MCF 10A (cell line): ENCODE measurements at regions of chr3 and their contacts with region 1.

Region 1: GRCh38 chr3:35908366-35909232 is 269.3 kb downstream of the ARPP21 start:
- DNase-seq: peak; percentile 79
- H3K4me3 Mint-ChIP-seq: no peak overlapping the region
- H3K27ac Mint-ChIP-seq: no peak overlapping the region
- H3K4me1 Mint-ChIP-seq: no peaks in the 10 kb centered on the region
- H3K27me3 Mint-ChIP-seq: peaks cover 32% of the 10 kb centered on the region
- CTCF ChIP-seq: peak; percentile 76

Region 2: GRCh38 chr3:33980252-33980651 is 1928.3 kb before region 1 on chr3:
- CTCF ChIA-PET with region 1: interaction called, 6 read pairs
- POLR2A ChIA-PET with region 1: no interaction called
- intact Hi-C with region 1: loop called (anchors 2 kb)
- DNase-seq: peak; percentile 82
- H3K4me3 Mint-ChIP-seq: no peak overlapping the region
- H3K27ac Mint-ChIP-seq: no peak overlapping the region
- H3K4me1 Mint-ChIP-seq: no peaks in the 10 kb centered on the region
- H3K27me3 Mint-ChIP-seq: peaks cover 40% of the 10 kb centered on the region
- CTCF ChIP-seq: peak; percentile 60

Region 3: GRCh38 chr3:34619990-34620389 is 1288.6 kb before region 1 on chr3:
- CTCF ChIA-PET with region 1: no interaction called
- POLR2A ChIA-PET with region 1: no interaction called
- intact Hi-C with region 1: loop called (anchors 1 kb)
- DNase-seq: peak; percentile 27
- H3K4me3 Mint-ChIP-seq: no peak overlapping the region
- H3K27ac Mint-ChIP-seq: no peak overlapping the region
- H3K4me1 Mint-ChIP-seq: no peaks in the 10 kb centered on the region
- H3K27me3 Mint-ChIP-seq: peaks cover 68% of the 10 kb centered on the region
- CTCF ChIP-seq: peak; percentile 12

Region 4: GRCh38 chr3:34882764-34883163 is 1025.8 kb before region 1 on chr3:
- CTCF ChIA-PET with region 1: no interaction called
- POLR2A ChIA-PET with region 1: no interaction called
- intact Hi-C with region 1: loop called (anchors 1 kb)
- DNase-seq: peak; percentile 11
- H3K4me3 Mint-ChIP-seq: no peak overlapping the region
- H3K27ac Mint-ChIP-seq: no peak overlapping the region
- H3K4me1 Mint-ChIP-seq: no peaks in the 10 kb centered on the region
- H3K27me3 Mint-ChIP-seq: peaks cover 23% of the 10 kb centered on the region
- CTCF ChIP-seq: peak; percentile 44

Region 5: DNA sequence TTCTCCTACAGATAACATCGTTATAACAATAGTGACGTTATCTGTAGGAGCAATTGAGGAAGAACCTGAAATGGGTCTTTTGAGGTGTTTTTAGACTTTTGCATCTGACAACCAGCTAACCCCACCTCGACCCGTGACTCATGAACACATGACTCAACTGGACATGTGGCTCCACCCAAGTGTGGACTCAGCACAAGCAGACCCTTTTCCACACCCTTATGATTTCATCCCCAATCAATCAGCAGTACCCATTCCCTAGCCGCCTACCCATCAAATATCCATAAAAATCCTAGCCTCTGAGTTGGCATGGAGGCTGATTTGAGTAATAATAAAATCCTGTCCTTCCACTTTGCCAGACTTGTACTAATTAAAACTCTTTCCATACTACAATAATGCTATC is 13.9 kb before region 1 on chr3:
- CTCF ChIA-PET with region 1: interaction called, 49 read pairs
- POLR2A ChIA-PET with region 1: no interaction called
- intact Hi-C with region 1: no loop called
- DNase-seq: no peak
- H3K4me3 Mint-ChIP-seq: no peak overlapping the region
- H3K27ac Mint-ChIP-seq: no peak overlapping the region
- H3K4me1 Mint-ChIP-seq: no peaks in the 10 kb centered on the region
- H3K27me3 Mint-ChIP-seq: no peaks in the 10 kb centered on the region
- CTCF ChIP-seq: no peak

Region 6: GRCh38 chr3:35921706-35922105 is 13.1 kb after region 1 on chr3:
- CTCF ChIA-PET with region 1: interaction called, 16 read pairs
- POLR2A ChIA-PET with region 1: no interaction called
- intact Hi-C with region 1: no loop called
- DNase-seq: no peak
- H3K4me3 Mint-ChIP-seq: no peak overlapping the region
- H3K27ac Mint-ChIP-seq: no peak overlapping the region
- H3K4me1 Mint-ChIP-seq: no peaks in the 10 kb centered on the region
- H3K27me3 Mint-ChIP-seq: peaks cover 40% of the 10 kb centered on the region
- CTCF ChIP-seq: no peak